ENCODE measurements at regions of chr3 and their contacts with region 1.

Region 1: DNA sequence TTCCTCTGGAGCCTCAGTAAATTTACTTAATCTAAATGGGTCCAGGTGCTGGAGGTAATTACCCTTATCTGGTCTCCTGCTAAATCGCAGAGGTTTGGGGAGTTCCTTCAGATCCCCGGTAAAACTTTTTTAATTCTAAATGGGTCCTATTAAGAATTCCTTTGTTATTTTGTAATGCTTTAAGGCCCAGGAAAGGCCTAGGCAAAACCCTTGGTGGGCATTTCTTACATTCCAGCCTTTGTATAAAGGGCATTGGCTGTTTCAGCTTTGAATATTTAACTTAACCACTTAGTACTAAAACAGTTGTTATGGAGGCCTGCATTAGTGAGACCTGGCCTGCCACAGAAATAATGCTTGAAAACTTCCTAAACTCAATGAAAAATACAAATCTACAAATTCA is 14.9 kb upstream of the ZNF662 start:
- DNase-seq: no peak
- H3K4me3 ChIP-seq: no peak overlapping the region
- H3K27ac ChIP-seq: no peak overlapping the region
- H3K4me1 ChIP-seq: no peaks in the 10 kb centered on the region
- CTCF ChIP-seq: no peak

Region 2: DNA sequence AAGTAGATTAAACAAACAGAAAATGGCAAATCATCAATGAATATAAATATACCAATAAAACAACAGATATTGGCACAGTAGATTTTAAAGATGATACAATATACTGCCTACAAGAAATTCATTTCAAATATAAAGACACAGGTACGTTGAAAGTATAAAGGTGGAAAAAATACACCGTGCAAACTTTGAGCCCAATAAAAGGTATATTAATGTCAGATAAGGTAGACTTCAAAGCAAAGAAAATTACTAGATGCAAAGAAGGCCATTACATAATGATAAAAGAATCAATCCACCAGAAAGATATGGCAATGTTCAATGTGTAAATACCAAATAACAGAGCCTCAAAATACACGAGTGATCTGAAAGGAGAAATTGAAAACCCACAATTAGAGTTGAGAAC is 422.9 kb before region 1 on chr3:
- CTCF ChIA-PET with region 1: no interaction called
- POLR2A ChIA-PET with region 1: interaction called, 10 read pairs
- intact Hi-C with region 1: no loop called
- DNase-seq: no peak
- H3K4me3 ChIP-seq: no peak overlapping the region
- H3K27ac ChIP-seq: no peak overlapping the region
- H3K4me1 ChIP-seq: no peaks in the 10 kb centered on the region
- CTCF ChIP-seq: no peak

Measured in OCI-LY7 (cell line).